OCI-LY7 (cell line): ENCODE measurements at regions of chr12 and their contacts with region 1.

Region 1: DNA sequence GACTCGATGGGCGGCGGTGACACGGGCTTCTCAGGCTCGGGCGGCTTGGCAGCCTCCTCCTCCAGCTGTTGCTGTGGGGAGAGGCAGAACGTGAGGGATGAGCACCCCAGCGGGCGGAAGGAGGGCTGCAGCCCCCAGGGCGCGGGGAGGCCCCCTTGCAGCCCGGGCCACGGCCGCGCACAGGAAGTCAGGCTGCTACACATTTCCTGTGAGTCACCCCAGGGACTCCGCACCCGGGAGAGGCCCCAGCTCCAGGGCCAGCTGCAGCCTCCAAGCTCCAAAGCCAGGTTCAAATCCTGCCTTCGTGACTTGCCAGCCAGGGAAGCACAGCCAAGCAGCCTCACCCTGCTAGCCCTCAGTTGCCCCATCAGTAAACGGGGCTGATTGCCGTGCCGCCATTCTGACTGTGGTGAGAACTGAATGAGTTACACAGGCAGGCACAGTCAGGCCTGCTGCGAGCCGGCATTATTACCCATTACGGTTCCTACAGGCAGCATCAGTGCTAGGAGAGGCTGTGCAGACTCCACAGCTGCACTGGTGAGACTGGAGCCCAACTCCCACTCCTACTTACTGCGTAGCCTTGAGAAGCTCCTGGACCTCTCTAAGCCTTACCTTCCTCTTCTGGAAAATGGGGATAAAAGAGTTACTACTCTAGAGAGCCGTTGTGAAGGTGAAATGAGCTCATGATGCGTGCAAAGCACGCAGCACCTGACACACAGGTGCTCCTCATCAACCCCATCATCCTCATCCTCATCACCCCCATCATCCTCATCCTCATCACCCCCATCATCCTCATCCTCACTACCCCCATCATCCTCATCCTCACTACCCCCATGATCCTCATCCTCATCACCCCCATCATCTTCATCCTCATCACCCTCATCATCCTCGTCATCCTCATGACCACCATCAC is 100.9 kb downstream of the NCOR2 start:
- DNase-seq: peak; percentile 89
- H3K4me3 ChIP-seq: peak overlapping the region; percentile 46
- H3K27ac ChIP-seq: peak overlapping the region; percentile 79
- H3K4me1 ChIP-seq: peaks cover 28% of the 10 kb centered on the region
- CTCF ChIP-seq: peak; percentile 56

Region 2: GRCh38 chr12:123643911-123644310 is 822.6 kb before region 1 on chr12:
- CTCF ChIA-PET with region 1: no interaction called
- POLR2A ChIA-PET with region 1: no interaction called
- intact Hi-C with region 1: no loop called
- DNase-seq: no peak
- H3K4me3 ChIP-seq: no peak overlapping the region
- H3K27ac ChIP-seq: no peak overlapping the region
- H3K4me1 ChIP-seq: no peaks in the 10 kb centered on the region
- CTCF ChIP-seq: no peak

Region 3: GRCh38 chr12:124391340-124392261 is 74.9 kb before region 1 on chr12:
- CTCF ChIA-PET with region 1: no interaction called
- POLR2A ChIA-PET with region 1: no interaction called
- intact Hi-C with region 1: loop called (anchors 5 kb)
- DNase-seq: peak; percentile 75
- H3K4me3 ChIP-seq: peak overlapping the region; percentile 38
- H3K27ac ChIP-seq: peak overlapping the region; percentile 66
- H3K4me1 ChIP-seq: peaks cover 22% of the 10 kb centered on the region
- CTCF ChIP-seq: no peak

Region 4: DNA sequence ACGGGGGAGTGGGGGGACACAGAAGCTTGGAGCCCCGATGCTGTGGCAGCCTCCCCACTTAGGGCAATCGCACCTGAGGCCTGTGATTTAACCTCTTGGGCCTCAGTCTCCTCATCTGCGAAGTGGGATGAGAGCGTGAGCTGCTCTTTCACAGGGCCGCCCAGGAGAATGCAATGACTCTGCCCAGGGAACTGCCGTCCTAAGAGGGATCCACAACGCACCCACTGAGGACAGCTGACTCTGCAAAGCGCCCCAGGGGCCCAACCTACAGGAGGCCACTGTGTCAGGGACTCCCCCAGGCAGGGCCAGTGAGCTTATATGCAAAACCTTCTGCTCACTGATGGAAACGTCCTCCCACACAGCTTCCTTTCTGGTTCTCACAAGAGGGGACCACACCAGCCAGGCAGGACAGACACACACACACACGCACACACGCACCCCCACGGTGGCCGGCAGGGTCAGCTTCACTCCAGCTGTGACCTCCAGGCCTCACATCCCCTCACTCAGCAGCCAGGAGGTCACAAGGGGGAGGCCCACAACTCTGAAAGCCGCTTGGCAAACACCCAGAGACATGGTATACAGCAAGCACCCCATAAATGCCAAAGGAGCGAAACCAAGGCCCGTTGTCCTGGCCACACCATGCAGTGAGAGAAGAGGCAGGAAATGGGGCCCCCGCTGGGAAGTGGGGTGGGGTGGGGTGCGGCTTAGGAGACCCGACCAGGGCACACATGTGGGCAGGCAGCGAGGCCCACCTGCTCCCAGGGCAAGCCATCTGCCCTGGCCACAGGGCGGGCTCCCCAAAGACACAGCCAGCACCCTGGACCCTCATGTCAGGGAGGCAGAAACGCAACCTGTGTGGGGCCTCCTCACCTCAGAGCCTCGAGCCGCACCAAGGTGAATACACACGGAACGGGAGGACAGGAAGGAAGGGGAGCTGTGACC is 27.6 kb after region 1 on chr12:
- CTCF ChIA-PET with region 1: no interaction called
- POLR2A ChIA-PET with region 1: no interaction called
- intact Hi-C with region 1: no loop called
- DNase-seq: peak; percentile 23
- H3K4me3 ChIP-seq: no peak overlapping the region
- H3K27ac ChIP-seq: no peak overlapping the region
- H3K4me1 ChIP-seq: peaks cover 17% of the 10 kb centered on the region
- CTCF ChIP-seq: no peak

Region 5: GRCh38 chr12:124609041-124609995 is 142.8 kb after region 1 on chr12:
- CTCF ChIA-PET with region 1: no interaction called
- POLR2A ChIA-PET with region 1: no interaction called
- intact Hi-C with region 1: loop called (anchors 5 kb)
- DNase-seq: peak; percentile 96
- H3K4me3 ChIP-seq: peak overlapping the region; percentile 48
- H3K27ac ChIP-seq: peak overlapping the region; percentile 89
- H3K4me1 ChIP-seq: peaks cover 39% of the 10 kb centered on the region
- CTCF ChIP-seq: peak; percentile 24; the same call in 1 of the 2 replicates